ENCODE measurements at regions of chr14 and their contacts with region 1.

Region 1: GRCh38 chr14:101707068-101707842 is 54.3 kb upstream of the PPP2R5C start:
- DNase-seq: peak; percentile 74
- ATAC-seq: peak; percentile 79
- H3K4me3 Mint-ChIP-seq: peak overlapping the region; percentile 33
- H3K27ac Mint-ChIP-seq: peak overlapping the region; percentile 81
- H3K4me1 Mint-ChIP-seq: peaks cover 29% of the 10 kb centered on the region
- H3K27me3 Mint-ChIP-seq: no peaks in the 10 kb centered on the region

Region 2: DNA sequence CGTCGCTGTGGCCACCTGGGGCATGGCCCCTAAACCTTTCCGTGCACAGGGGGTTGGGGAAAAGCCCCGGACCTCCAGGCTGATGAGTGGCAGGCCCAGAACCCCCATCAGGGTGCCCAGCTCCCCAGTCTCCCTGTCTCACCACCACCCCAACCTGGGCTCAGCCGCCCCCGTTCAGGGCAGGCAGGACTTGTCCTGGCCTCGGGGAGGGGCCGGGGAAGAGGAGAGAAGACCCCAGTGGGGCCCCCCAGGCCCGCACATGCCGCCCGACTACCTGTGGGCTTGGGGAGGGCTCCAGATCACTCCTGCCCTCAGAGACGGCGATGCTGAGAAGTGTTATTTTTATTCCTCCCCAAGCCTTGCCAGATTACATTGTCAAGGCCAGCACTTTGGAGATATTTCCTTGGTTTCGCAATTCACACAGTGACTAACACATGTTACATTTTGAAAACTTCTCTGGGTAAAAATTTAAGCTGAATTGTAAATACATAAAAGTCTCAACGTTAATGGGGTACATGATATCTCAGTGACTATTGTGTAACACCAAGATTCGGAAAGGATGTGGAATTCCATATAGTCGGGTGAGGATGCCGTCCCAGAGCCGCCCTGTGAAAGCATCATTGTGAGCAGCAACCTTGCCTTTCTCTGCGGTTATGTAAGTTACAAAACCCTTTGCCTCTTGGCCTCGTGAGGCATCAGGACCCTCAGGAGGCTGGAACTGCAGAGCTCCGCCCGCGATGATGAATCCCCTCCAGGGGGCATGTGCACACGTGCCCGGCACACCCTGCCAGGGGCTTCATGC is 231.6 kb before region 1 on chr14:
- CTCF ChIA-PET with region 1: no interaction called
- POLR2A ChIA-PET with region 1: no interaction called
- intact Hi-C with region 1: no loop called
- DNase-seq: no peak
- ATAC-seq: no peak
- H3K4me3 Mint-ChIP-seq: no peak overlapping the region
- H3K27ac Mint-ChIP-seq: no peak overlapping the region
- H3K4me1 Mint-ChIP-seq: no peaks in the 10 kb centered on the region
- H3K27me3 Mint-ChIP-seq: peaks cover 11% of the 10 kb centered on the region

Region 3: GRCh38 chr14:101721951-101722661 is 14.9 kb after region 1 on chr14:
- CTCF ChIA-PET with region 1: interaction called, 8 read pairs
- POLR2A ChIA-PET with region 1: interaction called, 7 read pairs
- intact Hi-C with region 1: loop called in 1 of 2 experiments (anchors 2 kb)
- DNase-seq: peak; percentile 78
- ATAC-seq: peak; percentile 90
- H3K4me3 Mint-ChIP-seq: peak overlapping the region; percentile 74
- H3K27ac Mint-ChIP-seq: peak overlapping the region; percentile 99
- H3K4me1 Mint-ChIP-seq: peaks cover 48% of the 10 kb centered on the region
- H3K27me3 Mint-ChIP-seq: no peaks in the 10 kb centered on the region

Region 4: GRCh38 chr14:101761032-101761880 is 54.0 kb after region 1 on chr14 and contains the start of gene PPP2R5C:
- CTCF ChIA-PET with region 1: interaction called, 15 read pairs
- POLR2A ChIA-PET with region 1: interaction called, 5 read pairs
- intact Hi-C with region 1: loop called (anchors 1 to 2 kb)
- DNase-seq: peak; percentile 94
- ATAC-seq: peak; percentile 65
- H3K4me3 Mint-ChIP-seq: peak within 1 kb of the TSS; percentile 85
- H3K27ac Mint-ChIP-seq: peak within 1 kb of the TSS; percentile 78
- H3K4me1 Mint-ChIP-seq: peaks cover 43% of the 10 kb centered on the region
- H3K27me3 Mint-ChIP-seq: no peaks in the 10 kb centered on the region
- total RNA-seq, gene PPP2R5C: 232 to 281 TPM

Region 5: DNA sequence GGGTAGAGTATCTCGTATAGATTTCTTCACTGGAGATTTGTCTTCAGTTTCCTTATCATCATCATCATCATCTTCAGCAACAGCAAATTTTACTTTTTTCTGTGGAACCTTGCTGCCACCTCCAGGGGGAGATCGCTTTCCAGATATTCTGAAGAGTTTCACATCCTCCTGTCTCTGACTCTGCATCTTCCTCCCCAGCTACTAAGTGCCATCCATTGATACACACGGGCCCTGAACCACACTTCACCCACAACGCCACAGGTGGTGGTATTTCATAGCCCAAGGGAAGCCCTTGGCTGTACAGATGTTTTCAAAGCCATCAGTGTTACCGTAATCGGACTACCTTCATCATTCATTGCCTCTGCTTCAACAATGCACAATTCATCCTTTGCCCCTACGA is 136.4 kb after region 1 on chr14:
- CTCF ChIA-PET with region 1: interaction called, 8 read pairs
- POLR2A ChIA-PET with region 1: no interaction called
- intact Hi-C with region 1: loop called (anchors 1 to 2 kb)
- DNase-seq: peak; percentile 78
- ATAC-seq: peak; percentile 66
- H3K4me3 Mint-ChIP-seq: no peak overlapping the region
- H3K27ac Mint-ChIP-seq: peak overlapping the region; percentile 82
- H3K4me1 Mint-ChIP-seq: peaks cover 87% of the 10 kb centered on the region
- H3K27me3 Mint-ChIP-seq: no peaks in the 10 kb centered on the region

Region 6: DNA sequence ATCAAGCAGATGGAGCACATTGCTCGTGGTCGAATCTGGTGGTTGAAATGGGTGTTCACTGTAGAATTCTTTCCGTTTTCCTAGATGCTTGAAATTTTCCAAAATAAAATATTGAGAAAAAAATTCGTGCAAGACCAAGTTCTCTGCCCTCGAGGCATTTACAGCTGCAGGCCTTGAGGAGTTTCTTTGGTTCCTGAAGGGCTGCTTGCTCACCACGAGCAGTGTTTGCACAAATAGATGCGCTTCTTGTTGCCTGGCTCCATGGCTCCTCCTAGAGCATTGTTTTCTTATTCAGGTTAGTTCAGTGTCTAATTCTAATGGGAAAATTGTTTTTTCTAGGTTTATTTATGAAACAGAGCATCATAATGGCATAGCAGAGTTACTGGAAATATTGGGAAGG is 182.6 kb after region 1 on chr14:
- CTCF ChIA-PET with region 1: interaction called, 3 read pairs
- POLR2A ChIA-PET with region 1: no interaction called
- intact Hi-C with region 1: loop called in 1 of 2 experiments (anchors 5 kb)
- DNase-seq: no peak
- ATAC-seq: no peak
- H3K4me3 Mint-ChIP-seq: no peak overlapping the region
- H3K27ac Mint-ChIP-seq: no peak overlapping the region
- H3K4me1 Mint-ChIP-seq: no peaks in the 10 kb centered on the region
- H3K27me3 Mint-ChIP-seq: no peaks in the 10 kb centered on the region

Region 7: GRCh38 chr14:102020058-102020971 is 313.1 kb after region 1 on chr14:
- CTCF ChIA-PET with region 1: interaction called, 5 read pairs
- POLR2A ChIA-PET with region 1: no interaction called
- intact Hi-C with region 1: loop called in 1 of 2 experiments (anchors 1 kb)
- DNase-seq: peak; percentile 79
- ATAC-seq: peak; percentile 89
- H3K4me3 Mint-ChIP-seq: peak overlapping the region; percentile 13
- H3K27ac Mint-ChIP-seq: peak overlapping the region; percentile 88
- H3K4me1 Mint-ChIP-seq: peaks cover 20% of the 10 kb centered on the region
- H3K27me3 Mint-ChIP-seq: no peaks in the 10 kb centered on the region

Region 8: DNA sequence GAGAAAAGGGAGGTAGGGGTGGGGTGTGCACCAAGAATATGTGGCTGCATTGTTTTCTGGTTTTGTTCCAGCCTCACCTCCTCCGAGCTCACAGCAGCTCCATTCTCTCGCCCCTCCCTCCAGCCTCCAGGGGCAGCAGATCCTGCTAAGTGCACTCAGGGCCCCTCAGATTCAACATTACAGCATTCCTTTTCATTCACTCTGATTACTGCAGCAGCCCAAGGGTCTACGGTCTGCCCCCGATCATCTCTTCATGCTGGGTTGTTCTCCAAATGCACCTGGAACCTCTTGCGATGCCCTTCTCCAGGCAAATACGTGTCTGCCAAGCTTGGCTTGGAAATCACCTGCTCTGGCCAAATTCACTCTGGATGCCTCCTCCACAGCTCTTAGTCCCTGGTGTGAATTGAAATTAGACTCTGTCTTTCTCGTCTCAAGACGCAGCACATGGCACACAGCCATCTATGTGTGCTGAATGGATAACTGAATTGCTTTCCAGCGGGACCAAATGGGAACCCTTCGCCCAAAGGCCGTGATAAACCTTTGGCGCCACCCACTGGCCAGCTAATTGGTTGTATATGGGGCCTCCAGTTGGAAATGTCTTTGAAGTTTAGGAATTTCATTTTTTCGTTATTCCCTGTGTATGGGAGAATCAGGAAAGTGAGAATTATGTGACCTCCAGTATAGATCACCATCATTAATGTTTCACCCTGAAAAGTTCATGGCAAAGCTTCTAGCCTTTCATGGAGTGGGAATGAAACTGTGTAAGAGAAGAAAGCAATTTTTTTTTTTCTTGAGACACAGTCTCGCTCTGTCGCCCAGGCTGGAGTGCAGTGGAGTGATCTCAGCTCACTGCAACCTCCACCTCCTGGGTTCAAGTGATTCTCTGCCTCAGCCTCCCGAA is 389.2 kb after region 1 on chr14:
- CTCF ChIA-PET with region 1: interaction called, 3 read pairs
- POLR2A ChIA-PET with region 1: no interaction called
- intact Hi-C with region 1: loop called in 1 of 2 experiments (anchors 10 kb)
- DNase-seq: peak; percentile 82
- ATAC-seq: peak; percentile 57
- H3K4me3 Mint-ChIP-seq: no peak overlapping the region
- H3K27ac Mint-ChIP-seq: peak overlapping the region; percentile 51
- H3K4me1 Mint-ChIP-seq: peaks cover 22% of the 10 kb centered on the region
- H3K27me3 Mint-ChIP-seq: no peaks in the 10 kb centered on the region

Region 9: DNA sequence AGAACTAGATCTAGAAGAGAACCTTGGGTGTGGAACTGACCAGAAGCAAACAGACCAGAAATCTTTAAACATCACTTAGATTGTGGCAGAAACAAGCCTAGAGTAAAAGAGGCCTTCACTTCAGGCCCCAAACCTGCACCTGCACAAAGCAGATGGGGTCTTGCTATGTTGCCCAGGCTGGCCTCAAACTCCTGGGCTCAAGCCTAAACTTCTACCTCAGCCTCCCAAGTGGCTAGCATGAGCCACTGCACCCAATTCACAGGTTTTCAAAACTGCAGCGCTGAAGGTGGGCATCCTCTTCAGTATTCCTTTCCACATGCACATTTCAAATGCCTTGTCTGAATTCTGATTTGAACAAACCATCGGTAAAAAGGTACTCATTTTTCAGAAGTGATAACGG is 577.9 kb after region 1 on chr14:
- CTCF ChIA-PET with region 1: no interaction called
- POLR2A ChIA-PET with region 1: no interaction called
- intact Hi-C with region 1: no loop called
- DNase-seq: no peak
- ATAC-seq: no peak
- H3K4me3 Mint-ChIP-seq: no peak overlapping the region
- H3K27ac Mint-ChIP-seq: no peak overlapping the region
- H3K4me1 Mint-ChIP-seq: no peaks in the 10 kb centered on the region
- H3K27me3 Mint-ChIP-seq: no peaks in the 10 kb centered on the region

Measured in activated CD4-positive, alpha-beta T cell treated with anti-CD3 and anti-CD28 coated beads for 36 hours (primary cell).